WTC11 (cell line): ENCODE measurements at regions of chr6 and their contacts with region 1.

Region 1: GRCh38 chr6:44667668-44668390 is 280.3 kb downstream of the CDC5L start:
- DNase-seq: peak; percentile 68
- ATAC-seq: peak; percentile 65
- H3K4me3 Mint-ChIP-seq: no peak overlapping the region
- H3K27ac Mint-ChIP-seq: peak overlapping the region; percentile 62; the same call in 1 of the 2 replicates
- H3K4me1 Mint-ChIP-seq: peaks cover 86% of the 10 kb centered on the region
- H3K27me3 Mint-ChIP-seq: no peaks in the 10 kb centered on the region
- CTCF ChIP-seq: peak; percentile 75

Region 2: DNA sequence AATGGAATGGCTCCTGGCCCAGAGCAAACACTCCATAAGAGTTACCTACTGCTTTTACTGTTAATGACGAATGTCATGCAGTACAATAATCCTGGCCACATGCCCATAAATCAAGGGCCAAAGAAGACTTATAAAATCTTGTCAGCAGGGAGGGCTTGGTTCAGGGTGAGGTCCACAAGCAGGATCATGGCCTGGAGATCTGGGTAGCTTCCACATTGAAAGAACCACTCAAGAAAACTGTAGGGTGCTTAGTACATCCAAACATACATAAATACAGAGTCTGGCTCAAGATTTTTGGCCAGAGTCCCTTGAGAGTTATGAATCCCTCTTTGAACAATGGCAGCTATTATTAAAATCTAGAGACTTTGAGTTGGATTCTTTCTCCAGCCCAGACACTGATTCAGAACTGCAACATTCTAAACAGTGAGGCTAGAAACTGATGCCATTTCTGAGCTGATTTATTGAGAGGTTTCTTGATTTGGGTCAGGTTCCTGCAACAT is 91.6 kb before region 1 on chr6:
- CTCF ChIA-PET with region 1: no interaction called
- POLR2A ChIA-PET with region 1: no interaction called
- DNase-seq: no peak
- ATAC-seq: no peak
- H3K4me3 Mint-ChIP-seq: no peak overlapping the region
- H3K27ac Mint-ChIP-seq: no peak overlapping the region
- H3K4me1 Mint-ChIP-seq: no peaks in the 10 kb centered on the region
- H3K27me3 Mint-ChIP-seq: no peaks in the 10 kb centered on the region; the same call in none of the 2 replicates
- CTCF ChIP-seq: no peak

Region 3: DNA sequence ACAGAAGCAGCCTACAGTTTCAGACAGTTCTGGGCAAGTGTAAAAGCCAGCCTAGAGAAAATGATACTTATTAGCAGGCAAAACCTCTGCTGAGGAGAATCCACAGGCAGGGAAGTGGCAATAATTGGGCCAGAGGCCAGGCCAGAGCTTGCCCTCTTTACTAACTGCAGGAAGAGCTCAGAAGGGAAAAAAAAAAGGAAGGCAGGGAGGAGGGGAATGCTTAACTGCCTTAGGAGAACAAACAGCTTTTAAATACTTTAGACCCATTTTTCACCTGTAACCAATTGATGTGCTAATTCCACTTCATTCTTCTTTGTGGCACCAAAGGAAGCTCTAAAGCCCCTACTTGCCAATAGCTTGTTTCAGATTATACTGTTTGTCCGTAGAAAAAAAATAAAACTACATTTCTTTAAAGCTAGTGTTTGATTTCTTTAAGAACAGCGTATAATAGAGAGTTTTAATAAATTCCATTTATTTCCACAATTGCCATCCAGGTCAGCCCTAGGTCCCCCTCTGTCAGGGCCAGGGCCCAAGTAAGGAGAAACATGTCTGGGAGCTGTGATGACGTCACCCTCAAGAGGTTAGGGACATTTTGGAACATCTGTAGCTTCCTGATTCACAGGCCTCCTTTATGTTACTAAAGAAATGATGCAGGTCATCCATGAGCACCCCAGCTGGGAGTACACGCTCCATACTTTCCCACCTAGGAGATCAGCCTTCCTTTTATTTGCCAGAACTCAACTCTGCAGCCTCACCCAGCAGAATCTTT is 104.0 kb after region 1 on chr6:
- CTCF ChIA-PET with region 1: interaction called, 11 read pairs
- POLR2A ChIA-PET with region 1: no interaction called
- DNase-seq: no peak
- ATAC-seq: peak; percentile 93
- H3K4me3 Mint-ChIP-seq: 0 out of 2 replicates have a peak overlapping the region, but pooled peaks have one; percentile 7
- H3K27ac Mint-ChIP-seq: peak overlapping the region; percentile 21
- H3K4me1 Mint-ChIP-seq: peaks cover 29% of the 10 kb centered on the region
- H3K27me3 Mint-ChIP-seq: no peaks in the 10 kb centered on the region
- CTCF ChIP-seq: no peak

Region 4: GRCh38 chr6:44779130-44779826 is 111.4 kb after region 1 on chr6:
- CTCF ChIA-PET with region 1: interaction called, 12 read pairs
- POLR2A ChIA-PET with region 1: no interaction called
- DNase-seq: no peak
- ATAC-seq: no peak
- H3K4me3 Mint-ChIP-seq: no peak overlapping the region
- H3K27ac Mint-ChIP-seq: no peak overlapping the region
- H3K4me1 Mint-ChIP-seq: peaks cover 12% of the 10 kb centered on the region
- H3K27me3 Mint-ChIP-seq: no peaks in the 10 kb centered on the region
- CTCF ChIP-seq: no peak